ENCODE measurements at regions of chr12 and their contacts with region 1.

Region 1: DNA sequence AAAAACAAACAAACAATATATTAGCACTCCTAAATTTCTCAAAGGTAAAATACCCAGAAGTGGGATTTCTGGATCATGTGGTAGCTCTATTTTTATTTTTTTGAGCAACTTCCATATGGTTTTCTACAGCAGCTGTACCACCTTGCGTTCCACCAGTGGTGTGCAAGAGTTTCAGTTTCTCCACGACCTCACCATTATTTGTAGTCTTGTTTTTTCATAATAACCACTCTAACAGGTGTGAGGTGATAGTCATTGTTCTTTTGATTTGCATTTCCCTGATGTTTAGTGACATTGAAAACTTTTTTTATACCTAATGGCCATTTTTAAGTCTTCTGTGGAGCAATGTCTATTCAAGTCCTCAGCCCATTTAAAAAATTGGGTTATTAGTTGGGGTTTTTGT is 127.3 kb upstream of the SLC38A2 start:
- DNase-seq: no peak
- H3K4me3 ChIP-seq: no peak overlapping the region
- H3K27ac ChIP-seq: no peak overlapping the region
- H3K4me1 ChIP-seq: peaks cover 2% of the 10 kb centered on the region
- H3K27me3 ChIP-seq: no peaks in the 10 kb centered on the region
- CTCF ChIP-seq: no peak
- EP300 ChIP-seq: no peak
- POLR2A ChIP-seq: no peak

Region 2: GRCh38 chr12:46523863-46524770 is 24.2 kb after region 1 on chr12:
- intact Hi-C with region 1: loop called in 1 of 4 experiments (anchors 1 kb)
- DNase-seq: peak in 1 of 5 donors; percentile 17
- H3K4me3 ChIP-seq: no peak overlapping the region
- H3K27ac ChIP-seq: peak overlapping the region; percentile 27 to 60
- H3K4me1 ChIP-seq: peaks cover 35% of the 10 kb centered on the region
- H3K27me3 ChIP-seq: no peaks in the 10 kb centered on the region
- CTCF ChIP-seq: no peak
- EP300 ChIP-seq: no peak
- POLR2A ChIP-seq: no peak

Region 3: GRCh38 chr12:46763230-46763629 is 263.3 kb after region 1 on chr12:
- intact Hi-C with region 1: no loop called
- DNase-seq: no peak
- H3K4me3 ChIP-seq: no peak overlapping the region
- H3K27ac ChIP-seq: no peak overlapping the region
- H3K4me1 ChIP-seq: no peaks in the 10 kb centered on the region
- H3K27me3 ChIP-seq: no peaks in the 10 kb centered on the region
- CTCF ChIP-seq: no peak
- EP300 ChIP-seq: no peak
- POLR2A ChIP-seq: no peak

Measured in ovary (tissue), 10 donors.